B cell (primary cell): ENCODE measurements at regions of chr13 and their contacts with region 1.

Region 1: GRCh38 chr13:27826379-27827353 is 34.4 kb downstream of the GSX1 start:
- DNase-seq: peak; percentile 79
- ATAC-seq: peak; percentile 69
- H3K4me3 ChIP-seq: no peak overlapping the region
- H3K4me3 Mint-ChIP-seq: no peak overlapping the region
- H3K27ac ChIP-seq: no peak overlapping the region
- H3K27ac Mint-ChIP-seq: no peak overlapping the region
- H3K4me1 ChIP-seq: peaks cover 5 to 15% of the 10 kb centered on the region in 2 donors
- H3K4me1 Mint-ChIP-seq: peaks cover 7% of the 10 kb centered on the region
- H3K27me3 ChIP-seq: peaks cover 0 to 76% (median 27%) of the 10 kb centered on the region in 4 experiments
- H3K27me3 Mint-ChIP-seq: peaks cover 76% of the 10 kb centered on the region
- CTCF ChIP-seq: peak; percentile 90

Region 2: GRCh38 chr13:27362064-27362883 is 464.4 kb before region 1 on chr13:
- CTCF ChIA-PET with region 1: interaction called, 322 read pairs
- POLR2A ChIA-PET with region 1: no interaction called
- intact Hi-C with region 1: loop called (anchors 1 kb)
- DNase-seq: peak; percentile 85
- ATAC-seq: peak; percentile 91
- H3K4me3 ChIP-seq: peak overlapping the region in 4 of 5 experiments; percentile 28 to 56 (median 42)
- H3K4me3 Mint-ChIP-seq: peak overlapping the region; percentile 49
- H3K27ac ChIP-seq: no peak overlapping the region
- H3K27ac Mint-ChIP-seq: no peak overlapping the region
- H3K4me1 ChIP-seq: peaks cover 10% of the 10 kb centered on the region in 2 donors
- H3K4me1 Mint-ChIP-seq: peaks cover 12% of the 10 kb centered on the region
- H3K27me3 ChIP-seq: peaks cover 0 to 30% (median 11%) of the 10 kb centered on the region in 4 experiments
- H3K27me3 Mint-ChIP-seq: peaks cover 22% of the 10 kb centered on the region
- CTCF ChIP-seq: peak; percentile 87

Region 3: DNA sequence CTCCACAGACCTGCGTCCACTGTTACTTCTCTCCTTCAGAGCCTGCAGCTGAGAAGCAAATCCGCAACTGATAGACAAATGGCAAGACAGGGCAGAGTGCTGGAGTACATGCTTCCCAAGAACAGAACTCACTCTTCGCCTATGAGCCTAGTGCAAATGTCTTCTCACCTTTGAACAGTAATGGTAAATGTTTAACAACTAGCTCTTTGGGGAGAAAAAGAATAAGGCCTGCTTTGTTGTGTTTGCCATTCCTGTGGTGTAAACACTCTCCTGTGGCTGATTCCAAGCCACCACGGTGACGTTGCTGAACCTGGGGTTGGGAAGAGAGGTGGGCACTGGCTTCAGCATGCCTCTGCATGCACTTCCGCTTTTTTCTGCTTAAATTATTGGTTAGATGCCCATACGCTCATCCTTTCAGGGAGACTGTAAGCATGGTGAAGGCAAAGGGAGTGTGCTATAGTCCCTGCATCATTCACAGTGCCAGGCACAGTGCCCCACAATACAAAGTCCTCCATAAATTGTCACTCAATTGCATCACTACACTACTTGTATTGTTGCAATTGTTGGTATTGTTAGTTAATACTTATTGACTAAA is 430.3 kb before region 1 on chr13:
- CTCF ChIA-PET with region 1: interaction called, 119 read pairs
- POLR2A ChIA-PET with region 1: no interaction called
- intact Hi-C with region 1: no loop called
- DNase-seq: no peak
- ATAC-seq: no peak
- H3K4me3 ChIP-seq: no peak overlapping the region
- H3K4me3 Mint-ChIP-seq: no peak overlapping the region
- H3K27ac ChIP-seq: no peak overlapping the region
- H3K27ac Mint-ChIP-seq: no peak overlapping the region
- H3K4me1 ChIP-seq: peaks cover 4% of the 10 kb centered on the region in 2 donors
- H3K4me1 Mint-ChIP-seq: peaks cover 5% of the 10 kb centered on the region
- H3K27me3 ChIP-seq: peaks cover 0 to 7% (median 3%) of the 10 kb centered on the region in 4 experiments
- H3K27me3 Mint-ChIP-seq: peaks cover 11% of the 10 kb centered on the region
- CTCF ChIP-seq: no peak

Region 4: DNA sequence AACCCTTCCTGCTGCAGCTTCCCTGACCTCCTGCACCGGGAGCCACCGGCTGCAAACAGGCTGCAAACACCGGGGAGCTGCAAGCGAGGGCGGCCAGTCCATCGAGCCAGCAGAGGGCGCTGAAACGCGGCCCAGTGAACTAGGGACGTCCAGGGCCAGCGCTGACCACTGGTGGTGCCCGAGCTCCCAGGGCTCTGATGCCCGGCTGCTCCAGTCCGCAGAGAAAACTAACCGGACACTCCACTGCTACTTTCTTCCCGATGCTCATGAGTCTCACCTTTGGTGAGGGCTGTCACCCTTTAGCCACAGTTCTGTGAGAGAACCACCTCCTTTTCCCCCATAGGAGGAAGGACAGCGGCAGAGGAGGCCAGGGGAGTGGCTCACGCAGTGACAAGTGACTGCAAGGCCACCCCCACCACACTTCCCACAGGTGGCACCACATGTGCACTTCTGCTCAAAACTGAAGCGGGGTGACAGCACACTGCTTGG is 293.5 kb before region 1 on chr13:
- CTCF ChIA-PET with region 1: interaction called, 19 read pairs
- POLR2A ChIA-PET with region 1: no interaction called
- intact Hi-C with region 1: loop called (anchors 1 kb)
- DNase-seq: peak; percentile 57
- ATAC-seq: peak; percentile 70
- H3K4me3 ChIP-seq: peak overlapping the region in 3 of 5 experiments; percentile 16 to 44 (median 17)
- H3K4me3 Mint-ChIP-seq: peak overlapping the region; percentile 69
- H3K27ac ChIP-seq: no peak overlapping the region
- H3K27ac Mint-ChIP-seq: no peak overlapping the region
- H3K4me1 ChIP-seq: peaks cover 9 to 15% of the 10 kb centered on the region in 2 donors
- H3K4me1 Mint-ChIP-seq: peaks cover 26% of the 10 kb centered on the region
- H3K27me3 ChIP-seq: no peaks in the 10 kb centered on the region
- H3K27me3 Mint-ChIP-seq: no peaks in the 10 kb centered on the region
- CTCF ChIP-seq: peak; percentile 73

Region 5: DNA sequence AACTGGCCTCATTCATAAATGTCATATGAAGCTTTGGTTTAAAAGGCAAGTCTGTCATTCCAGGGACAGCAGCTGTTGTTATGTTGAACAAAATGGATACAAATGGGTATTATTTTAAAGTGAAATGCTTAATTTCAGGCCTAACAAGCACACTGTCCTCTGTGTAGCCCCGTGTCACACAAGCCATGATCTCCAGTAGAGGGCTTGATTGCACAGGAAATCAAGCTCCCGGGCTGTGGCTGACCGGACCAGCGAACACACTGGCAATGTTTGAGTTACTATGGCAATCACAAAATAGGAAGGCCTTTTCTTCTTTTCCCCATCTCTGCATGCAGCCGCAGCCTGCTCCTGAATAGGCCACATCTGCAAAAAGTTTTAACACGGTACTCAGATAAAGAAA is 98.4 kb before region 1 on chr13:
- CTCF ChIA-PET with region 1: no interaction called
- POLR2A ChIA-PET with region 1: no interaction called
- intact Hi-C with region 1: no loop called
- DNase-seq: no peak
- ATAC-seq: no peak
- H3K4me3 ChIP-seq: no peak overlapping the region
- H3K4me3 Mint-ChIP-seq: no peak overlapping the region
- H3K27ac ChIP-seq: no peak overlapping the region
- H3K27ac Mint-ChIP-seq: no peak overlapping the region
- H3K4me1 ChIP-seq: no peaks in the 10 kb centered on the region
- H3K4me1 Mint-ChIP-seq: no peaks in the 10 kb centered on the region
- H3K27me3 ChIP-seq: peaks cover 0 to 21% (median 2%) of the 10 kb centered on the region in 4 experiments
- H3K27me3 Mint-ChIP-seq: peaks cover 44% of the 10 kb centered on the region
- CTCF ChIP-seq: no peak

Region 6: GRCh38 chr13:27808851-27809550 is 17.7 kb before region 1 on chr13:
- CTCF ChIA-PET with region 1: interaction called, 22 read pairs
- POLR2A ChIA-PET with region 1: no interaction called
- intact Hi-C with region 1: no loop called
- DNase-seq: no peak
- ATAC-seq: no peak
- H3K4me3 ChIP-seq: no peak overlapping the region
- H3K4me3 Mint-ChIP-seq: no peak overlapping the region
- H3K27ac ChIP-seq: no peak overlapping the region
- H3K27ac Mint-ChIP-seq: no peak overlapping the region
- H3K4me1 ChIP-seq: no peaks in the 10 kb centered on the region
- H3K4me1 Mint-ChIP-seq: no peaks in the 10 kb centered on the region
- H3K27me3 ChIP-seq: peaks cover 0 to 31% (median 0%) of the 10 kb centered on the region in 4 experiments
- H3K27me3 Mint-ChIP-seq: peaks cover 75% of the 10 kb centered on the region
- CTCF ChIP-seq: no peak

Region 7: DNA sequence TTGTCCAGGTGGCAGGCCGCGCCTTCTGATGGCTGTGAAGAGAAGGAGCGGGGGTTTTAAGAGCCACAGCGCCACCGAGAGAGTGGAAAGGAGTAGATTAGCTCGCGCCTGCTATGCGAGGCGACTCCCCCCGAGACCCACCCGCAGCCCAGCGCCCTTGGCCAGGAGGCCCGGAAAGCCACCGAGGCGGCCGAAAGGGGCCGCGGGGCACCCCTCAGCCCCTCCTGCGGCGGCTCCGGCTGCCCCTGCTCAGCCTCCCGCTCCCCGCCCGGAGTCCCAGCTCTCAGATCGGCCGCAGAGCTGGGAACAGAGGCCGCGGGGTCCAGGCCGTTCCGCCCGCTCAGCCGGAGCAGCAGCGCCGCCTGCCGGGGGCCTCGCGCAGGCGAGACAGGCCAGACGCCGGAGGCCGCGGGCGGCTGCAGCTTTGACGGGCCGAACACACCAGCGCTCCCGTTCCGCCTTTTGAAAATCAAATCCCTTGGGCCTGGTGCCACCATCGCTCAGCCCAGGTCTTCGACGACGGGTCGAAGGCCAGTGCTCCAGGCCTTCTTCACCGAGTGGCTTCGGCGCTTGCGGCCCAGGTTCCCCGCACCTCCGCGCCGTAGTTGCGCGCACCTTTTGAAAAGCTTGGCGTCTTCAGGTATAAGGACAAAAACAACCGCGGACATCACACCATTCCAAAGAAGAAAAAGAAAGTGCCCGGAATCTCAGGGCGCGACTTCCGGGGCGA is 127.2 kb after region 1 on chr13:
- CTCF ChIA-PET with region 1: interaction called, 43 read pairs
- POLR2A ChIA-PET with region 1: no interaction called
- intact Hi-C with region 1: no loop called
- DNase-seq: peak; percentile 81
- ATAC-seq: peak; percentile 88
- H3K4me3 ChIP-seq: peak overlapping the region in 4 of 5 experiments; percentile 31 to 53 (median 43)
- H3K4me3 Mint-ChIP-seq: peak overlapping the region; percentile 86
- H3K27ac ChIP-seq: no peak overlapping the region
- H3K27ac Mint-ChIP-seq: no peak overlapping the region
- H3K4me1 ChIP-seq: peaks cover 21 to 25% of the 10 kb centered on the region in 2 donors
- H3K4me1 Mint-ChIP-seq: peaks cover 15% of the 10 kb centered on the region
- H3K27me3 ChIP-seq: peaks cover 0 to 58% (median 44%) of the 10 kb centered on the region in 4 experiments
- H3K27me3 Mint-ChIP-seq: peaks cover 74% of the 10 kb centered on the region
- CTCF ChIP-seq: peak; percentile 86